ENCODE measurements at regions of chr2 and their contacts with region 1.

Region 1: GRCh38 chr2:151828143-151828889 is at the start of gene ARL5A:
- DNase-seq: peak; percentile 96
- H3K4me3 ChIP-seq: peak within 1 kb of the TSS; percentile 78 to 81
- H3K27ac ChIP-seq: peak within 1 kb of the TSS; percentile 82 to 84
- H3K4me1 ChIP-seq: no peaks in the 10 kb centered on the region
- H3K27me3 ChIP-seq: no peaks in the 10 kb centered on the region
- CTCF ChIP-seq: peak in 1 of 4 experiments; percentile 7
- POLR2A ChIP-seq: peak; percentile 94
- total RNA-seq, gene ARL5A: 28.0 to 33.8 TPM

Region 2: DNA sequence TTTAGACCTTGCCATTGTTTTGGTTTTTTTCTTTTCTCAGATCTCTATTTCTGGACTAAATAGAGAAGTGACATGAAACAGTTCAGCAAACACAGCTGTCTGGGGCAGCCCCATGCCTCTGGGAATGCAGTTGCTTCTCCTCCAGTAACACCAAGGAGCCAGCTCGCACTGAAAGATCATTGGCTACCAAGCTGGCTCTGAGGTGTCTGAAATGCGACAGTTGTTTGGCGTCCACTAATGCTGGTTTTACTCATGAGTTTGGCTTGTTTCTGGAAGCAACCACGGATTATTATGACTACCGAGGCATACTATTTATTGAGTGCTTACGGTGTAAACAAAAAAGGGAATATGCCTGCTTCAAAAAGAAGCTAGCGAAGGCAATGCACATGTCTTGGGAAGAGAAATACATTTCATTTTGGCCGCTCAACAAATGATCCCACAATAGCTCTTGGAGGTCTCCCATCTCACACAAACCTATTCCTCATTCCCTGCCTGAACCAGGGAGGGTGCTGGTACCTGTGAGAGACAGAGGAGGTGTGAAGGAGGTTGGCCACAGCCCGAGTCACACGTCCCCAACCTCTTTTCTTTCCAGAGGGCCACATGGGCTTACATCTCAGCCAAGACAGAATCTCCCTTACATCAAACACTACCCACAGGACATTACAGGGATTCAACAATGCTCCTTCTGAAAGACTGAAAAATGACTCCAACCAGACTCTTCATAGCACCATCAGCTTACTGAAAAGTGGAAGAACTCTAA is 56.5 kb before region 1 on chr2:
- intact Hi-C with region 1: loop called (anchors 10 kb)
- DNase-seq: no peak
- H3K4me3 ChIP-seq: no peak overlapping the region
- H3K27ac ChIP-seq: no peak overlapping the region
- H3K4me1 ChIP-seq: peaks cover 7% of the 10 kb centered on the region
- H3K27me3 ChIP-seq: no peaks in the 10 kb centered on the region
- CTCF ChIP-seq: no peak
- POLR2A ChIP-seq: no peak

Region 3: GRCh38 chr2:152005607-152006006 is 177.3 kb after region 1 on chr2:
- intact Hi-C with region 1: loop called (anchors 10 kb)
- DNase-seq: no peak
- H3K4me3 ChIP-seq: no peak overlapping the region
- H3K27ac ChIP-seq: no peak overlapping the region
- H3K4me1 ChIP-seq: no peaks in the 10 kb centered on the region
- H3K27me3 ChIP-seq: no peaks in the 10 kb centered on the region
- CTCF ChIP-seq: no peak
- POLR2A ChIP-seq: no peak

Region 4: GRCh38 chr2:152047819-152048471 is 219.6 kb after region 1 on chr2:
- intact Hi-C with region 1: no loop called
- DNase-seq: no peak
- H3K4me3 ChIP-seq: no peak overlapping the region
- H3K27ac ChIP-seq: no peak overlapping the region
- H3K4me1 ChIP-seq: no peaks in the 10 kb centered on the region
- H3K27me3 ChIP-seq: no peaks in the 10 kb centered on the region
- CTCF ChIP-seq: no peak
- POLR2A ChIP-seq: no peak

Region 5: GRCh38 chr2:152062125-152063091 is 234.1 kb after region 1 on chr2:
- intact Hi-C with region 1: no loop called
- DNase-seq: peak; percentile 32
- H3K4me3 ChIP-seq: no peak overlapping the region
- H3K27ac ChIP-seq: peak overlapping the region in 1 of 2 donors; percentile 30
- H3K4me1 ChIP-seq: peaks cover 5% of the 10 kb centered on the region
- H3K27me3 ChIP-seq: no peaks in the 10 kb centered on the region
- CTCF ChIP-seq: no peak
- POLR2A ChIP-seq: no peak